Sigmoid colon (tissue), 7 donors: ENCODE measurements at regions of chr4 and their contacts with region 1.

Region 1: DNA sequence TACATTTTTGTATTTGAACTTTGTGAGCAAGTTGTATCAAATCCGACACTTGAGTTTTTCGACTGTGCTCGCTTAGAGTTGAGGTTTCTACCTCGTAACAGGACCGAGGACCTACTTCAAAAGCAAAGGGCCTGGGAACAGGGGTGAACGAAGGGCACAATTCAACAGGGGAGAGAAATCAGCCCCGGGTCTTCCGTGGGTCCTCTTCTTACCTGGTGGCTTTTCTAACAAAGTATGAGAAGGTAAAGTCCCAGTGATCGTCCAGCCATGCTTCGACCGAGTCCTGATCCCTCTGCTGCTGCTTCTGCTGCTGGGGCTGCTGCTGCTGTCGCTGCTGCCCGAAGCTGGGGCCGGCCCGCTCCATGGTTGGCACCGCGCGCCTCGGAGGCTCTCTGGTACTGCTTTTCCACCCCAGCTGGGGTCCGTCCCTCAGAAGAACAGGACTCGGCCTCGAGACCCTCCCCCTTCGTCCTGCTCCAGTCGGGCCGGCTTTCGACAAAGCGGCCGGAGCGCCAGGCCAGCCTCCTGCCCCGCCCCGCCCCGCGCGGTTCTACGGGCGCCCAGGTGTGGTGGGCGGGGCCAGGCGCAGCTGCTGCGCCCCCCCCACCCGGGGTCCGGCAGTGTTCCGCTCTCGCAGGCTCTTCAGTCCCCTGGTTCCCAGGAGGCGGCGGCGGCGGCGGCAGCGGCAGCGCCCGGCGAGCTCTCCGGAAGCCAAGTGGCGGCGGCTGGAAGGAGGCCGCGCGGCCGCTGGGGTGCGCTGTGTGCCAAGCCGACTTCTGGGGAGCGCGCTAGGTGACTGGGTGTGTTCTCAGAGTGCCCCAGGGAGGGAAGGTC is at the start of gene PDE5A:
- DNase-seq: peak; percentile 91
- H3K4me3 ChIP-seq: peak within 1 kb of the TSS; percentile 75 to 96 (median 83)
- H3K27ac ChIP-seq: peak within 1 kb of the TSS; percentile 92 to 96 (median 94)
- H3K4me1 ChIP-seq: peaks cover 0 to 28% (median 16%) of the 10 kb centered on the region in 4 donors
- H3K27me3 ChIP-seq: no peaks in the 10 kb centered on the region
- CTCF ChIP-seq: peak; percentile 67 to 80 (median 75)
- EP300 ChIP-seq: no peak
- POLR2A ChIP-seq: no peak
- total RNA-seq, gene PDE5A: 138 to 209 (median 149) TPM

Region 2: GRCh38 chr4:118869808-118870342 is 758.6 kb before region 1 on chr4:
- intact Hi-C with region 1: no loop called
- DNase-seq: no peak
- H3K4me3 ChIP-seq: no peak overlapping the region
- H3K27ac ChIP-seq: peak overlapping the region in 2 of 4 donors; percentile 13 to 38
- H3K4me1 ChIP-seq: peaks cover 0 to 16% (median 10%) of the 10 kb centered on the region in 4 donors
- H3K27me3 ChIP-seq: no peaks in the 10 kb centered on the region
- CTCF ChIP-seq: no peak
- EP300 ChIP-seq: no peak
- POLR2A ChIP-seq: no peak

Region 3: DNA sequence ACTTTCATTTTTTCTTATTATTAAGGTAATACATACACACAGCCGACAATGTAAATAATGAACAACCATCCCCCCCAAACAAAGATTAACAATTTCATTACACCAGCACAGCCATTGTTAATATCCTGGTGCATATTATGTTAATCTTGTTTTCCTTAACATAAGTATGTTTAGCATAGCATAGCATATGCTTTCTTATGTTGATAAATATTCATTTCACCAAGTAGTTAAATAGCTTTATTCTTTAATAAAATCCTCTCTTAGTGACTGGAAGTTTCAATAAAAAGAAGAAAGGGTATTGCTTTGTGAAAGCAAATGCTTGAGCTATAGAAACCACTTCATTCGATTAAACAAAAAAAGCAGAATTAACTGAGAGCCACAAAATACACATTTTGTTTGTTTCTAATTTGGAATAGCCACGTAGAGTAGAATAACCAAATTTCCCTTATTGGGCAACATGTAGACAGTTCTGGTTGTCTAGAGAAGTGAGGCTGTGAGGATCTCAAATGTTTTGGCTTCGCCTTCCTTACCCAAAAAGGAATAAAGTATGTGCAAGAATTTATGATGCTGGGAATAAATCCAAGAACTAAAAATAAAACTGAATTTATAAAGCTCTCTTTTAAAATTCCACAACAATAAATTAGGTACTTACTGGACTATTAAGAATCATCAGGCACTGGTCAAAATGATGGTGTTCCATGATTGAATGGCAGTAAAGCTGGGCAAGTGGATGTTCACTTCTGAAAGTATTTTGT is 118.0 kb before region 1 on chr4:
- intact Hi-C with region 1: loop called (anchors 5 kb)
- DNase-seq: no peak
- H3K4me3 ChIP-seq: no peak overlapping the region
- H3K27ac ChIP-seq: peak overlapping the region; percentile 66 to 83 (median 78)
- H3K4me1 ChIP-seq: peaks cover 0 to 72% (median 50%) of the 10 kb centered on the region in 4 donors
- H3K27me3 ChIP-seq: no peaks in the 10 kb centered on the region
- CTCF ChIP-seq: no peak
- EP300 ChIP-seq: peak in 3 of 4 donors; percentile 48 to 64 (median 61)
- POLR2A ChIP-seq: no peak

Region 4: DNA sequence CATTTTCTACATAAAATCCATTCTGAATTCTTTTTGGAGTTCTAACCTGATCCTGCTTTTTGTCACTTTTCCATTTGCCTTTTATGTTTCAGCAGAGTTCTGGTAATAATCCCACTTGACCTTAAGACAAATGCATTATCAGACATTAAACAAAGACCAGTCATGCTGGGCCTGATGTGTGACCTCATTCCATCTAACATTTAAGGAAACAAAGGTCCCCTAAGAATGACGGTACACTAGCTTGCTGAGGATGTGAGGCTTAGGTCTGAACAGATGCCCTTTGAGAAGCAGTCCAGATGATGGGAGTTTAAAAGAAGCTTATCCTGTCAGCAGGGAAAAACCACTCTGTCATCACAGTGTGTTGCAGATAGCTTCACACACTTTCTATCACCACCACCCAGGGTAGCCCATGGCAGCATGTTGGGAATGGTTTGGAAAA is 38.1 kb after region 1 on chr4:
- intact Hi-C with region 1: loop called (anchors 5 kb)
- DNase-seq: no peak
- H3K4me3 ChIP-seq: no peak overlapping the region
- H3K27ac ChIP-seq: peak overlapping the region; percentile 49 to 75 (median 70)
- H3K4me1 ChIP-seq: peaks cover 0 to 82% (median 61%) of the 10 kb centered on the region in 4 donors
- H3K27me3 ChIP-seq: no peaks in the 10 kb centered on the region
- CTCF ChIP-seq: no peak
- EP300 ChIP-seq: peak in 1 of 4 donors; percentile 39
- POLR2A ChIP-seq: no peak

Region 5: DNA sequence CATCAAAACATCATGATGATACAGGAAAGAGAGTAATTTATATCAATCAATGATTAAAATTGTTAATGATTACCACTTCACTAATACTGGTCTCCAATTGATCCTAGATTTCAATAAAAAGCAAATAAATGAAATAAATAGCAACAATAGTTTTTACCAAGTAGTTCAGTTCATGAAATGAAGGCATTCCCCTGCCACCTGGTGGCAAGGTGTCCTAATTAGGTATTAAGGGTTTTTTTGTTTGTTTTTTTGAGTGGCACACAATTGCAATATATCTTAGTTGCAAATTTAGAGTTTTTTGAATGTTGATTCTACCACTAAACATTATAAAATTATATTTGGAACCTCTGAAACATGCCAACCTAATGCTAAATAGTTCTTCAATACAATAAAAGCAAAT is 157.4 kb after region 1 on chr4:
- intact Hi-C with region 1: loop called (anchors 2 kb)
- DNase-seq: no peak
- H3K4me3 ChIP-seq: no peak overlapping the region
- H3K27ac ChIP-seq: no peak overlapping the region
- H3K4me1 ChIP-seq: no peaks in the 10 kb centered on the region
- H3K27me3 ChIP-seq: no peaks in the 10 kb centered on the region
- CTCF ChIP-seq: peak in 2 of 4 experiments; percentile 14 to 21
- EP300 ChIP-seq: no peak
- POLR2A ChIP-seq: no peak

Region 6: DNA sequence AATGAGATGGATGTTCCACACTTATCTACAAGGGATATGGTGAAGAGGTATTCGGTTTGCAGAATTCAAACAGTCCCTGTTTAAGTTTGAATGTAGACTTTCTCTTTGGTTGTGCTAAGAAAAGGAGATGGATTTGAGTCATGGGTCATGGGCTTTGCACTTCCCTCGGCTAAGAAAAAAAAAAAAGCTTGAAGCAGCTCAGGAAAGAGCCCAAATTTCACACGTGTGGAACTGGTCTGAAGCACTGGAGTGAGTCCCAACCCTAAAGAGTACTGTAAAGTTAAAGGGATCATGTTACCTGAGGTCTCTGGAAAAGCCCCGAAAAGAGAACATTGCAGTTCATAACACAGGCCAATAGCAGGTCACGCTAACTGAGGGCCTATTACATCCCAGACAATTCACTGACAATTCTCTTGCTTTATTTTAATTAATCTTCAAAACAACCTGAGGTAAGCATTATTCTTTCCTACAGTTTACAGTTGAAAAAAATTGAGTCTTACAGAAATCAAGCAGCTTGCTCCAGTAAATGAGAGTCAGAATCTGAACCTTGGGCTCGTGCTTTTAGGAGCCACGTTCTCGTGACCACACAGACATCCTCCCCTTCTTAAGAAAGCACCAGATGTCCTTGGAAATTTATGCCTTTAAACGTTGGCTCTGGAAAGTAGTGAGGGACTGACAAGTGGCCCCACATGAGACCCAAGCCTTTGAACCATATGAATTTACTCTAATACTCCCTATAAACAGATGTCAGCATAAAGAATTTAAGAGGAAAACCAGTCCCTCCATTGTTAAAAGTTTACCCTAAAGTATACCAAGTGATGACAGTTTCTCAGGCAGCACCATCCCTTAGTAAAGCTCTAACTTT is 348.8 kb after region 1 on chr4:
- intact Hi-C with region 1: loop called (anchors 2 kb)
- DNase-seq: peak; percentile 75
- H3K4me3 ChIP-seq: no peak overlapping the region
- H3K27ac ChIP-seq: peak overlapping the region; percentile 53 to 85 (median 80)
- H3K4me1 ChIP-seq: peaks cover 0 to 66% (median 29%) of the 10 kb centered on the region in 4 donors
- H3K27me3 ChIP-seq: no peaks in the 10 kb centered on the region
- CTCF ChIP-seq: no peak
- EP300 ChIP-seq: peak; percentile 80 to 90 (median 87)
- POLR2A ChIP-seq: no peak